ENCODE measurements at regions of chr3 and their contacts with region 1.

Region 1: GRCh38 chr3:32143849-32144757 is 37.7 kb downstream of the GPD1L start:
- DNase-seq: peak; percentile 62 to 83
- ATAC-seq: peak; percentile 93 to 98
- H3K4me3 ChIP-seq: no peak overlapping the region
- H3K27ac ChIP-seq: peak overlapping the region in 1 of 2 experiments; percentile 44; a peak in 2 of 6 replicates
- H3K4me1 ChIP-seq: peaks cover 12% of the 10 kb centered on the region
- CTCF ChIP-seq: peak; percentile 89
- EP300 ChIP-seq: no peak
- POLR2A ChIP-seq: no peak
- RAD21 ChIP-seq: peak; percentile 90

Region 2: GRCh38 chr3:32026593-32026992 is 117.5 kb before region 1 on chr3:
- CTCF ChIA-PET with region 1: interaction called, 17 read pairs
- POLR2A ChIA-PET with region 1: no interaction called
- DNase-seq: no peak
- ATAC-seq: no peak
- H3K4me3 ChIP-seq: no peak overlapping the region
- H3K27ac ChIP-seq: no peak overlapping the region
- H3K4me1 ChIP-seq: no peaks in the 10 kb centered on the region
- CTCF ChIP-seq: no peak
- EP300 ChIP-seq: no peak
- POLR2A ChIP-seq: no peak
- RAD21 ChIP-seq: no peak

Region 3: DNA sequence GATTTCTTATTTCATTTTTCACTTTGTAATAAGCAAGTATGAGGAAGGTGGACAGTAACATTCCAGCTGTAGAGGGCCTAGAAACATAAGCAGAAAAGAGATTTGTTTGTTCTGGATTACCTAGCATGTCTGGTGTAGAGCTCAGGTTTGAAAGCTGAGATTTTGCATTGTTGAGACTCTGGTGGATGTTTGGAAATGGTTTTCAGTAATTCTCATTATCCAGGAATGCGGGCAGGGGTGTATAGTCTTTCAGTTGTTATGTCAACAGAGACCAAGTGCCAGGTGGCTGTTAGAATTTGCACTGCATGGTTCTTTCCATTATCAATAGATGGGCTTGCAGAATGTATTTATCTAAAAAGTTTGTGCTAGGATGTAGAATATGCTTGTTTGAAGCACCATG is 26.8 kb before region 1 on chr3:
- CTCF ChIA-PET with region 1: interaction called, 13 read pairs
- POLR2A ChIA-PET with region 1: no interaction called
- DNase-seq: no peak
- ATAC-seq: no peak
- H3K4me3 ChIP-seq: no peak overlapping the region
- H3K27ac ChIP-seq: no peak overlapping the region
- H3K4me1 ChIP-seq: peaks cover 6% of the 10 kb centered on the region; the same call in 1 of the 3 replicates
- CTCF ChIP-seq: no peak
- EP300 ChIP-seq: no peak
- POLR2A ChIP-seq: no peak
- RAD21 ChIP-seq: no peak

Region 4: GRCh38 chr3:32132121-32132520 is 12.0 kb before region 1 on chr3:
- CTCF ChIA-PET with region 1: interaction called, 17 read pairs
- POLR2A ChIA-PET with region 1: no interaction called
- DNase-seq: no peak
- ATAC-seq: no peak
- H3K4me3 ChIP-seq: no peak overlapping the region
- H3K27ac ChIP-seq: no peak overlapping the region
- H3K4me1 ChIP-seq: no peaks in the 10 kb centered on the region
- CTCF ChIP-seq: no peak
- EP300 ChIP-seq: no peak
- POLR2A ChIP-seq: no peak
- RAD21 ChIP-seq: no peak

Region 5: GRCh38 chr3:32154205-32154579 is 10.1 kb after region 1 on chr3:
- CTCF ChIA-PET with region 1: interaction called, 27 read pairs
- POLR2A ChIA-PET with region 1: no interaction called
- DNase-seq: peak in 1 of 2 experiments; percentile 18
- ATAC-seq: peak; percentile 84 to 95; a peak in 5 of 6 replicates
- H3K4me3 ChIP-seq: no peak overlapping the region
- H3K27ac ChIP-seq: no peak overlapping the region
- H3K4me1 ChIP-seq: no peaks in the 10 kb centered on the region
- CTCF ChIP-seq: peak; percentile 32; the same call in 2 of the 3 replicates
- EP300 ChIP-seq: no peak
- POLR2A ChIP-seq: no peak
- RAD21 ChIP-seq: peak; percentile 39 to 44

Region 6: DNA sequence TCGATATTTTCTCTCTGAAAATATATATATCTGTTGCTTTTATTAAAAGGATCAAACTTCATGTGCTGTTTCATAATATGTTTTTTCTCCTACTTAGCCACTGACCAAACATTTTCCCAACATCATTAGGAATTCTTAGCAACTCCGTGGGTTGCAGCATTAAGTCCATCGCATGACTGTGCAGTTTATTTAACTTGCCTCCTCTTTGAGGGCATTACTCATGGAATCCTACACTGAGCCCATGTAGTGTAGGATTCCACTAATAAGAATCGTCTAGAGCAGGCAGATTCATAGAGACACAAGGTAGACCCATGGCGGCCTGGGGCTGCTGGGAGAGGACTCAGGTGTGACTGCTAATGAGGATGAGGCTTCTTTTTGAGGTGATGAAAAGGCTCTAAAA is 309.2 kb after region 1 on chr3:
- CTCF ChIA-PET with region 1: no interaction called
- POLR2A ChIA-PET with region 1: no interaction called
- DNase-seq: peak in 1 of 2 experiments; percentile 17
- ATAC-seq: peak in 1 of 2 experiments; percentile 50; a peak in 3 of 6 replicates
- H3K4me3 ChIP-seq: no peak overlapping the region
- H3K27ac ChIP-seq: peak overlapping the region in 1 of 2 experiments; percentile 34; a peak in 1 of 6 replicates
- H3K4me1 ChIP-seq: 0 out of 3 replicates have a peak, but pooled peaks cover 5% of the 10 kb centered on the region
- CTCF ChIP-seq: no peak
- EP300 ChIP-seq: no peak
- POLR2A ChIP-seq: no peak
- RAD21 ChIP-seq: no peak

Measured in A549 (cell line).